IMR-90 (cell line): ENCODE measurements at regions of chr16 and their contacts with region 1.

Region 1: GRCh38 chr16:72927199-72928089 is 120.5 kb downstream of the ZFHX3 start:
- DNase-seq: peak; percentile 97
- ATAC-seq: peak; percentile 87
- H3K4me3 ChIP-seq: no peak overlapping the region
- H3K27ac ChIP-seq: no peak overlapping the region
- H3K4me1 ChIP-seq: peaks cover 14% of the 10 kb centered on the region
- H3K27me3 ChIP-seq: peaks cover 4% of the 10 kb centered on the region; the same call in 1 of the 2 replicates
- CTCF ChIP-seq: no peak; the same call in 1 of the 2 replicates
- POLR2A ChIP-seq: no peak
- RAD21 ChIP-seq: peak; percentile 28; the same call in 1 of the 2 replicates

Region 2: DNA sequence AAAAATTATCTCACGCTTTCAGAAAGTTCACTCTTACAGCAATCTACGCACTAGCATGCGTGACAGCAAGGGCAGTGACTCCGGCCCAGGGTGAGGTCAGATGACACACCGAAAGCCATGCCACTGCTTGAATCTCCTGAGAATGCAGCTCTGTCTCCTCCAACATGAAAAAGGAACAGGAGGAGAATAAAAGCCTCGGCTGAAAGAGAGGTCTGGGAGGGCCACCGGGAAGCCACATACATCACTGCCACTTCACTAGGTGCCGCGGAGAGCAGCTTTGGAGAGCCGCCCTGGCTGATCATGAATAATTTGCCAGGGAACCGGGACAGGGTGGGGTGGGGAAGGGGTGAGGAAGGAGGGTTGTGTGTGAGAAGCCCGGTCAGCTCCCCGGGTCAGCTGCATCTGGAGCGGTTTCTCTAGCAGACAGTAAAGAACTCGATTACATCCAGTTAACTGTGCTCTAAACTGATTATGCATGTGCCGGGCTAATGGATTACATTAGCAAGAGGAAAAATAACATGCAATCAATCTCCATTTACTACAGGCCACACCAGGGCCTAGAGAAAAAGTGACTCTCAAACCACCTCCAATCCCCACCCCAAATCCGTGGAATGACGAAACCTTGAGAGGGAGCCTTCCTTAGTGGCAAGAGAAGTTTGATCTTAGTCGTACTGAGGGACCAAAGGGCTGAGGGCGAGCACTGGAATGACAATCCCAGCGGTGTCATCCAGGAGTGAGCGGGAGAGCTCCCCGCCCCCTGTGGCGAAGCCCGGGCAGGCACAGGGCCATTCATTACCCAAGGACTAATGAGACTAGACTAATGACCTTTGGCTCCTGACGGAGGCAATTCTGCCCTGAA is 20.2 kb after region 1 on chr16:
- CTCF ChIA-PET with region 1: no interaction called
- POLR2A ChIA-PET with region 1: no interaction called
- dilution Hi-C with region 1: no loop called
- in situ Hi-C with region 1: no loop called
- intact Hi-C with region 1: no loop called
- DNase-seq: no peak
- ATAC-seq: no peak
- H3K4me3 ChIP-seq: no peak overlapping the region
- H3K27ac ChIP-seq: no peak overlapping the region
- H3K4me1 ChIP-seq: peaks cover 9% of the 10 kb centered on the region
- H3K27me3 ChIP-seq: no peaks in the 10 kb centered on the region
- CTCF ChIP-seq: no peak
- POLR2A ChIP-seq: no peak
- RAD21 ChIP-seq: no peak

Region 3: GRCh38 chr16:72961121-72961763 is 33.8 kb after region 1 on chr16:
- CTCF ChIA-PET with region 1: no interaction called
- POLR2A ChIA-PET with region 1: interaction called, 14 read pairs
- dilution Hi-C with region 1: no loop called
- in situ Hi-C with region 1: no loop called
- intact Hi-C with region 1: no loop called
- DNase-seq: peak; percentile 30
- ATAC-seq: no peak
- H3K4me3 ChIP-seq: no peak overlapping the region
- H3K27ac ChIP-seq: no peak overlapping the region
- H3K4me1 ChIP-seq: peaks cover 2% of the 10 kb centered on the region
- H3K27me3 ChIP-seq: no peaks in the 10 kb centered on the region
- CTCF ChIP-seq: peak; percentile 58
- POLR2A ChIP-seq: no peak
- RAD21 ChIP-seq: peak; percentile 67

Region 4: GRCh38 chr16:73047518-73048291 is 120.3 kb after region 1 on chr16 and contains the start of gene ZFHX3:
- CTCF ChIA-PET with region 1: no interaction called
- POLR2A ChIA-PET with region 1: no interaction called
- dilution Hi-C with region 1: loop called (anchors 25 kb)
- in situ Hi-C with region 1: no loop called
- intact Hi-C with region 1: no loop called
- DNase-seq: peak; percentile 49
- ATAC-seq: peak; percentile 52
- H3K4me3 ChIP-seq: peak within 1 kb of the TSS; percentile 53
- H3K27ac ChIP-seq: peak within 1 kb of the TSS; percentile 92
- H3K4me1 ChIP-seq: peaks cover 53% of the 10 kb centered on the region
- H3K27me3 ChIP-seq: no peaks in the 10 kb centered on the region
- CTCF ChIP-seq: peak; percentile 29; the same call in 1 of the 2 replicates
- POLR2A ChIP-seq: no peak
- RAD21 ChIP-seq: peak; percentile 35
- total RNA-seq, gene ZFHX3: 1.4 and 2.2 TPM in 2 replicates